ENCODE measurements at regions of chr17 and their contacts with region 1.

Region 1: GRCh38 chr17:4215882-4216570 is 47.8 kb downstream of the ANKFY1 start:
- DNase-seq: no peak
- ATAC-seq: no peak
- H3K4me3 ChIP-seq: no peak overlapping the region
- H3K4me1 ChIP-seq: peaks cover 8% of the 10 kb centered on the region
- CTCF ChIP-seq: no peak

Region 2: GRCh38 chr17:3754458-3755334 is 461.3 kb before region 1 on chr17:
- intact Hi-C with region 1: no loop called
- DNase-seq: peak; percentile 96
- ATAC-seq: peak; percentile 95
- H3K4me3 ChIP-seq: no peak overlapping the region
- H3K4me1 ChIP-seq: no peaks in the 10 kb centered on the region
- CTCF ChIP-seq: no peak

Region 3: GRCh38 chr17:4074831-4075495 is 141.1 kb before region 1 on chr17:
- intact Hi-C with region 1: no loop called
- DNase-seq: no peak
- ATAC-seq: peak; percentile 84
- H3K4me3 ChIP-seq: no peak overlapping the region
- H3K4me1 ChIP-seq: no peaks in the 10 kb centered on the region
- CTCF ChIP-seq: peak; percentile 13

Region 4: GRCh38 chr17:4304417-4305027 is 88.5 kb after region 1 on chr17:
- intact Hi-C with region 1: loop called in 1 of 2 experiments (anchors 10 kb)
- DNase-seq: peak in 1 of 3 donors; percentile 88
- ATAC-seq: peak; percentile 87
- H3K4me3 ChIP-seq: no peak overlapping the region
- H3K4me1 ChIP-seq: peaks cover 5% of the 10 kb centered on the region
- CTCF ChIP-seq: peak; percentile 54

Region 5: GRCh38 chr17:4412933-4413831 is 197.2 kb after region 1 on chr17:
- intact Hi-C with region 1: loop called in 1 of 2 experiments (anchors 10 kb)
- DNase-seq: peak; percentile 90 to 95 (median 92)
- ATAC-seq: peak; percentile 99
- H3K4me3 ChIP-seq: no peak overlapping the region
- H3K4me1 ChIP-seq: no peaks in the 10 kb centered on the region
- CTCF ChIP-seq: peak; percentile 66

Measured in mucosa of descending colon (tissue), 3 donors.